ENCODE measurements at regions of chr1 and their contacts with region 1.

Region 1: DNA sequence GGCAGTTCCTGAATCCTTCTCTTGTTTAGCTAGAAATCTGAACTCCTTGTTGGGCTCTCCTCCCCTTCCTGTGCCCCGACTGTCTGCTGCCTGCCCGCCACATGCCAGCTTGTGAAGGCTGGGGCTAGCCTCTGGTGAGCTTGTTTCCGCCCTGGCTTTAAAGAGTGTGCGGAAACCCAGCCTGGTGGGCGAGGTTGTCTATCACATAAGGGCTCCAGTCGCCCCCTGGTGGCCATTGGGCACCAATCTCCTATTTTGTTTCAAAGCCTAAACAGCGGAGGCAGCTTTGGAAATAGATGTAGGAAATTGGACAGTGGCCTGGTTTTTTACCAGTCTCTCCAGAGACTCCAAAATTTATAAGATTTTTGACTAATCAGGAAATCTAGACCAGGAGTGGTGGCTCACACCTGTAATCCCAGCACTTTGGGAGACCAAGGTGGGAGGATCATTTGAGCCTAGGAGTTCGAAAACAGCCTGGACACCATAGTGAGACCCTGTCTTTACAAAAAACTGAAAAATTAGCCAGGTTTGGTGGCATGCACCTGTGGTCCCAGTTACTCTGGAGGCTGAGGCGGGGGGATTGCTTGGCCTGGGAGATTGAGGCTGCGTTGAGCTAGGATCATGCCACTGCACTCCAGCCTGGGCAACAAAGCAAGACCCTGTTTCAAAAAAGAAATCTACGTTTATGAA is 9.8 kb downstream of the ATP8B2 start:
- DNase-seq: peak; percentile 82 to 96
- ATAC-seq: peak; percentile 95 to 99 (median 99)
- H3K4me3 ChIP-seq: no peak overlapping the region
- H3K4me3 Mint-ChIP-seq: peak overlapping the region; percentile 78
- H3K27ac ChIP-seq: peak overlapping the region; percentile 41
- H3K27ac Mint-ChIP-seq: peak overlapping the region; percentile 88 to 92
- H3K4me1 ChIP-seq: peaks cover 63% of the 10 kb centered on the region
- H3K4me1 Mint-ChIP-seq: peaks cover 47 to 49% of the 10 kb centered on the region in 2 donors
- H3K27me3 ChIP-seq: no peaks in the 10 kb centered on the region
- H3K27me3 Mint-ChIP-seq: no peaks in the 10 kb centered on the region
- CTCF ChIP-seq: peak; percentile 97

Region 2: DNA sequence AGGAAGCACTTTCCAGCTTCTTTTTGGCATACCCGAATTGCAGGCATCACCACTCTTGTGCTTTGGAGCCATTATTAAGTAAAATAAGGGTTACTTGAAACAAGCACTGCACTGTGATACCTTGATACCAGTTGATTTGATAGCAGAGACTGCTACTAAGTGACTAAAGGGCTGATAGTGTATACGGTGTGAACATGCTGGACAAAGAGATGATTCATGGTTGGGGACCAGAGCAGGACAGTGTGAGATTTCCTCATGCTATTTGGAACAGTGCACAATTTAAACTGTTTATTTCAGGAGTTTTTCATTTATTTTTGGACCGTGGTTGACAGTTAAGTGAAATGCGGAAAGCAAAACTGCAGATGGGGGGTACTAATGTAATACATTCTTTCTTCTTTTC is 334.8 kb before region 1 on chr1:
- intact Hi-C with region 1: no loop called
- DNase-seq: no peak
- ATAC-seq: no peak
- H3K4me3 ChIP-seq: no peak overlapping the region
- H3K4me3 Mint-ChIP-seq: no peak overlapping the region
- H3K27ac ChIP-seq: no peak overlapping the region
- H3K27ac Mint-ChIP-seq: no peak overlapping the region
- H3K4me1 ChIP-seq: no peaks in the 10 kb centered on the region
- H3K4me1 Mint-ChIP-seq: peaks cover 2 to 4% of the 10 kb centered on the region in 2 donors
- H3K27me3 ChIP-seq: no peaks in the 10 kb centered on the region
- H3K27me3 Mint-ChIP-seq: no peaks in the 10 kb centered on the region
- CTCF ChIP-seq: no peak

Region 3: DNA sequence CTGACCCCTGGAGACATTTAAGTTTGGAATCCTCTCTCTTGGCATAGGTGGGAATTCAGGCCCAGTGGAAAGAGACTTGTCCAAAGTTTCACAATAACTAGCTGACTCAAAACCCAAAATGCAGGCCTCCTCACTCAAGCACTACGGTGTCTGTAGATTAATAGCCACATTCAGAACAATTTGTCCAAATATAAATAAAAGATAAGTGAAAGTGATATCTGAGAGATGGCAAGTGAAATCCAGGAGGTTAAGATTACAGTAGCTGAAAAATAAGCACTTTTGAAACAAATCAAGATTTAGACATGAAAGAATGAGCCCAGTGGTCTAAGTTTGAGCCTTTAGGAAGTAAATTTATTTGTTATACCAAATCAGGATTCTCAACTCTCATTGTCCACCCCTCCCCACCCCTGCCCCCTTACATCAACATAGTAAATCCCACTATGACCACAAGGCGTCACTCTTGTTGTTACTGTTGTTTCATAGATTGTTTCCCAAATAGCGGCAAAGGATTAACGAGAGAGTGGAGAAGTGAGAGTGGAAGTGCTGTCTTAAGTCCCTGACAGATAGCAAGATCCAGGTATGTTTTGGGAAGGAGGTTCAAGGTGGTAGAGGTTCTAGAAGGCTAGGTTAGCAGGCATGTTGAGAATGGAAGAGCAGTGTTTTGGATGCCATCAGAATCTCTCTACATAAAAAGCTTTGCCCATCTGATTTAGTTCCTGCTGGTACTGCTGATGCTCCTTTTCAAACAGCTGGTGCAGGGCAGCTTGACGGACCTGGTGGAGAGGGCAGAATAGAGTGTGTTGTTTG is 136.2 kb before region 1 on chr1:
- intact Hi-C with region 1: loop called (anchors 5 kb)
- DNase-seq: peak in 1 of 2 donors; percentile 82
- ATAC-seq: peak; percentile 77 to 88 (median 78)
- H3K4me3 ChIP-seq: no peak overlapping the region
- H3K4me3 Mint-ChIP-seq: no peak overlapping the region
- H3K27ac ChIP-seq: no peak overlapping the region
- H3K27ac Mint-ChIP-seq: no peak overlapping the region
- H3K4me1 ChIP-seq: no peaks in the 10 kb centered on the region
- H3K4me1 Mint-ChIP-seq: no peaks in the 10 kb centered on the region
- H3K27me3 ChIP-seq: no peaks in the 10 kb centered on the region
- H3K27me3 Mint-ChIP-seq: peaks cover 3 to 5% of the 10 kb centered on the region in 2 donors
- CTCF ChIP-seq: peak; percentile 50

Region 4: DNA sequence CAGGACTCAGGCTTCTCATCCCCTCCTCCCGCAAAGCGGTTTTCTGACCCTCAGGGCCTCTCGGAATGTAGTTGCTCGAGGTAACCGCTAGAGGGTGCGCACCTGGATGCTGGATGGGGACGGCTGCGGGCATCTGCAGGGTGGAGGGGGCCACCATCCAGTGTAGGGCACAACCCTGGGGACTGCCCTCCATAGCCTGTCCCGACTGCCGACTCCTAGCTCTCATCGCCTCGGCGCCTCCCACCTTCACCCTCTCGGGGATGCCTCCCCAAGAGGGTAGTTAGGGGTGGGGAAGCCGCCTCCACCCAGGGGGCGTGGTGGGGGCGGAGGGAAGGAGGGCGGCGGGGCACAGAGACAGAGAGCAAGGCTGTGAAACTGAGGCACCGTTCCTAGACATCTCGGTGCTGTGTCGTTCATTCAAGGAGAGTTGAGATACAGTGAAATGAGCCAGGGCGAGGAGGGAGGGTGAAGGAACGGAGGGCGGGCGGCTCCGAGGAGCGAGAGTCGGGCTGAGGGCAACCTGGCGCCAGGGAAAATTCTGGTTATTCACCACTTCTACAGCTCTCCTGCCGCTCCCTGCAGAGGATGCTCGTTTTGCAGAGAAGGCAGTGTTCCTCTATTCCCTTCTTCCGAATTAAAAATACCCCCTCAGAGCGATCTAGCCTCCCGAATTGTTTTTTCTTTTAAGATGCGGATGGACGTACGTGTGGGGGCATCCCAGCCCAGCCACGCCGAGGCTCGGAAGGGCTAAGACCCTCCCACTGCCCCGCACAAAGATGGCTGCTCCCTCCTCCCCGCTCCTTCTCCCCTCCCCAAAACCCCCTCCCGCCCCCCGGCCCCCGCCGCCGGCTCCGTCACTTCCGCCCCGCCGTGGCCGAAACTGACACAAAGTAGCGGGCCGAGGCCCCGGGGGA is 10.2 kb before region 1 on chr1 and contains the start of gene ATP8B2:
- intact Hi-C with region 1: loop called (anchors 1 kb)
- DNase-seq: peak; percentile 72 to 90
- ATAC-seq: peak; percentile 65 to 82 (median 66)
- H3K4me3 ChIP-seq: peak within 1 kb of the TSS; percentile 90
- H3K4me3 Mint-ChIP-seq: peak within 1 kb of the TSS; percentile 95
- H3K27ac ChIP-seq: peak within 1 kb of the TSS; percentile 63
- H3K27ac Mint-ChIP-seq: peak within 1 kb of the TSS; percentile 83 to 91
- H3K4me1 ChIP-seq: peaks cover 48% of the 10 kb centered on the region
- H3K4me1 Mint-ChIP-seq: peaks cover 30 to 49% of the 10 kb centered on the region in 2 donors
- H3K27me3 ChIP-seq: no peaks in the 10 kb centered on the region
- H3K27me3 Mint-ChIP-seq: peaks cover 7 to 8% of the 10 kb centered on the region in 2 donors
- CTCF ChIP-seq: peak; percentile 94
- total RNA-seq, gene ATP8B2: 47.8 to 67.5 (median 59.3) TPM

Measured in natural killer cell (primary cell).